ENCODE measurements at regions of chr16 and their contacts with region 1.

Region 1: GRCh38 chr16:24125214-24125613 is 130.9 kb upstream of the CACNG3 start:
- DNase-seq: no peak
- ATAC-seq: no peak
- H3K4me3 ChIP-seq: no peak overlapping the region
- H3K27ac ChIP-seq: no peak overlapping the region
- H3K4me1 ChIP-seq: no peaks in the 10 kb centered on the region
- H3K27me3 ChIP-seq: peaks cover 0 to 16% of the 10 kb centered on the region in 2 experiments; a peak in 2 of 5 replicates
- CTCF ChIP-seq: no peak
- EP300 ChIP-seq: no peak
- POLR2A ChIP-seq: no peak
- RAD21 ChIP-seq: no peak

Region 2: GRCh38 chr16:22814330-22815105 is 1310.7 kb before region 1 on chr16:
- CTCF ChIA-PET with region 1: no interaction called
- POLR2A ChIA-PET with region 1: no interaction called
- in situ Hi-C with region 1: no loop called
- intact Hi-C with region 1: loop called (anchors 5 kb)
- DNase-seq: no peak
- ATAC-seq: no peak; the same call in 2 of the 3 replicates
- H3K4me3 ChIP-seq: no peak overlapping the region
- H3K27ac ChIP-seq: no peak overlapping the region
- H3K4me1 ChIP-seq: no peaks in the 10 kb centered on the region
- H3K27me3 ChIP-seq: no peaks in the 10 kb centered on the region; a peak in 1 of 5 replicates
- CTCF ChIP-seq: no peak
- EP300 ChIP-seq: no peak
- POLR2A ChIP-seq: no peak
- RAD21 ChIP-seq: no peak